H1 (cell line): ENCODE measurements at regions of chr12 and their contacts with region 1.

Region 1: DNA sequence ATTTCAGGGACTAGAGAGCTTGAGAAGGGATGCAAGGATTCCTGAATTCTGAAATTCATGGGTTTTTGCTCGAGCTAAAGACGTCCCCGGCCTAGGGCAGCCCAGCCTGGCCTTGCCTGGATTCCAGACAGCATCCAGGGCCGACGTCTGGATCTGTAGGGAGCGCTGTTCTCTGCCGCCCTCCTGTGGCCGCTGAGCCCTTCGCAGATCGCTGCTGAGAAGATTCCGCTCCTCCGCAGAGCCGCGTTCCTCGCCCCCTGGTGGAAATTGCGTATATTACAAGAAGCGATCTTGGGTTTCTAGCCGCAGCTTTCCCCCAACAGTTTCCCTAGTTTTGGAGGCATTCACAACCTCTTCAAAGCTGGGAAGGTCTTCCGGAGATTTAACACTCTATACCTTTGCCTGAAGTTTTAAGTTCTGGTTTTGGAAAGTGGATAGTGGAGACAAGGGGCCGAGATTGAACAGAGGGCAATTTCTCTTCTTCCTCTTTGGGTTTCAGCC is 5.1 kb downstream of the CISTR start:
- DNase-seq: peak; percentile 77 to 96
- H3K4me3 ChIP-seq: no peak overlapping the region
- H3K27ac ChIP-seq: no peak overlapping the region
- H3K4me1 ChIP-seq: peaks cover 0 to 24% (median 6%) of the 10 kb centered on the region in 4 experiments; a peak in 5 of 7 replicates
- H3K27me3 ChIP-seq: peaks cover 43 to 77% (median 57%) of the 10 kb centered on the region in 4 experiments
- CTCF ChIP-seq: peak; percentile 99 to 100 (median 100)
- EP300 ChIP-seq: peak in 1 of 2 experiments; percentile 50; a peak in 1 of 3 replicates
- POLR2A ChIP-seq: no peak
- RAD21 ChIP-seq: peak; percentile 89 to 96

Region 2: DNA sequence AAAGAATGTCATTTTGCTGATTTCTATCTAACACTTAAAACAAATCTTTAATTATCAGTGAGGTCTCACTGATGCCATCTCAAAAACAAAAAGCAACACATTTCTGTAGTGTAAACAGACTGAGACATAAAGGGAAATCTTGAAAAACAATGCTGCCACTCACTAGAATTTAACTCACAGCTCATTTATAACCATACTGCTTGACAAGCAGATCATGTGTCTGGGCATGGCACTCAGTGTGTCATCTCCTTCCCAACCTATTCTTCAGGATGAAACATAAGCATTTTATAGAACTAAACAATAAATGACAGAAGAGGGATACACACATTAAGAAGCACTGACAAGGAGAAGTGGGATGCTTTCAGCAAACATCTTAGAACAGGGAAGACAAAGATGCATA is 142.8 kb before region 1 on chr12:
- CTCF ChIA-PET with region 1: no interaction called
- POLR2A ChIA-PET with region 1: no interaction called
- DNase-seq: no peak
- H3K4me3 ChIP-seq: no peak overlapping the region
- H3K27ac ChIP-seq: no peak overlapping the region
- H3K4me1 ChIP-seq: peaks cover 0 to 2% (median 0%) of the 10 kb centered on the region in 4 experiments; a peak in 1 of 7 replicates
- H3K27me3 ChIP-seq: no peaks in the 10 kb centered on the region
- CTCF ChIP-seq: no peak
- EP300 ChIP-seq: no peak
- POLR2A ChIP-seq: no peak
- RAD21 ChIP-seq: no peak

Region 3: GRCh38 chr12:53684654-53685220 is 61.9 kb before region 1 on chr12:
- CTCF ChIA-PET with region 1: interaction called, 46 read pairs
- POLR2A ChIA-PET with region 1: no interaction called
- DNase-seq: no peak
- H3K4me3 ChIP-seq: no peak overlapping the region
- H3K27ac ChIP-seq: no peak overlapping the region
- H3K4me1 ChIP-seq: peaks cover 0 to 3% (median 0%) of the 10 kb centered on the region in 4 experiments; a peak in 1 of 7 replicates
- H3K27me3 ChIP-seq: no peaks in the 10 kb centered on the region
- CTCF ChIP-seq: no peak
- EP300 ChIP-seq: no peak
- POLR2A ChIP-seq: no peak
- RAD21 ChIP-seq: no peak

Region 4: DNA sequence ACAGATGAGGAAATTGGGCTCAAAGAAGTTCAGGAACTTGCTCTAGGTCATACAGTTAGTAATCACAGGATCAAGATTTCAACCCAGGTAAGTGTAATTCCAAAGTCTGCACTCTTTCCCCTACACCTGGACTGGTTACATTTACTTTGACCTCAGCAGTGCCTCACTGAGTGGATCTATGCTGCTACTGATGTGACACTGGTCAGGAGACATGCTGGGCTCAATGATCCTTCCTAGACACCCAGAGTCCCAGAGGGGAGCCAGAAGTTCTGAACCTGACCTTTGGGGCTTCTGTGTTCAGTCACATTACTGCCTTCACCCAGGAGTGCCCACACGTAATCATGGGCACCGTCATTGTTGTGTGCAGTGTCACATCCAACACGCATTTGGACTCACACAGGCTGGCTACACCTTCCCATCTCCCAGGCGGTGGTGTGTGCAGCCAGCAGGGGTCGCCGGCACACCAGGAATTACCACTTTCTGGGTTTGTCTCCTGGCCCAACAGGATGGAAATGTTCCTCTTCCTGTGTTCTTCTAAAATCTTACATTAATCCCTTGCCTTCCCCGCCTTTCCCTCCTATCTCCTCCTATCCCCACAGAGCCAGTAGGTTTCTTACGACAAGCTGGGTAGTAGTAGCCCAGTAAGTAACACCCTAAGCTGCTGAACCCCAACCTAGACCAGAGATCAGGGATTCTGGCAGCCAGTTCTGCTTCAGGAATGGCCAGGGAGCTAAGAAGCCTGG is 45.0 kb before region 1 on chr12:
- CTCF ChIA-PET with region 1: interaction called, 531 read pairs
- POLR2A ChIA-PET with region 1: interaction called, 5 read pairs
- DNase-seq: peak in 1 of 2 experiments; percentile 91
- H3K4me3 ChIP-seq: no peak overlapping the region
- H3K27ac ChIP-seq: no peak overlapping the region
- H3K4me1 ChIP-seq: peaks cover 0 to 7% (median under 1%) of the 10 kb centered on the region in 4 experiments; a peak in 4 of 7 replicates
- H3K27me3 ChIP-seq: peaks cover 8 to 18% (median 16%) of the 10 kb centered on the region in 4 experiments
- CTCF ChIP-seq: peak; percentile 97 to 100 (median 98)
- EP300 ChIP-seq: no peak
- POLR2A ChIP-seq: no peak
- RAD21 ChIP-seq: peak; percentile 96 to 99

Region 5: GRCh38 chr12:53727310-53728041 is 19.2 kb before region 1 on chr12 and contains the start of gene CALCOCO1:
- CTCF ChIA-PET with region 1: interaction called, 237 read pairs
- POLR2A ChIA-PET with region 1: interaction called, 4 read pairs
- DNase-seq: peak; percentile 90
- H3K4me3 ChIP-seq: peak within 1 kb of the TSS; percentile 71 to 94 (median 82)
- H3K27ac ChIP-seq: no peak within 1 kb of the TSS
- H3K4me1 ChIP-seq: peaks cover 0 to 11% (median 1%) of the 10 kb centered on the region in 4 experiments; a peak in 5 of 7 replicates
- H3K27me3 ChIP-seq: peaks cover 0 to 3% (median 0%) of the 10 kb centered on the region in 4 experiments; a peak in 1 of 7 replicates
- CTCF ChIP-seq: no peak
- EP300 ChIP-seq: no peak
- POLR2A ChIP-seq: no peak
- RAD21 ChIP-seq: no peak
- total RNA-seq, gene CALCOCO1: 18.7 and 20.3 TPM in 2 replicates

Region 6: DNA sequence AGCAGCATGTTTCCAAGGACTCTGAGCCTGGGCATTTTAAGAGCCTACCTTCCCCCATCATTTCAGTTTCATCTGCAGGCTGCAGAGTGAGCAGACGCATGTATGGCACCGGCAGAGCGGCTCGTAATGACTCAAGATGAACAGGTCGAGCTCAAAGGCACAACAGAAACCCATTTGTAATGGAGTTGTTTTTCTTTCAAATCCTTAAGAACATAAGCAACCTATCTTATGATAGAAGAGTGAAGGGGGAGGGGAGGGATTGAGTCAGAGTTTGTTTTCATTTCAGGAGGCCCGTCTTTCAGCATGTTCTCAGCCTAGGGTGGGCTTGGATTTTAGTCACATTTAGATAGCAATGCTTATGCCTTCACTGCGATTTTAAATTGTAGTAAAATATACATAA is 60.1 kb after region 1 on chr12:
- CTCF ChIA-PET with region 1: interaction called, 19 read pairs
- POLR2A ChIA-PET with region 1: no interaction called
- DNase-seq: no peak
- H3K4me3 ChIP-seq: no peak overlapping the region
- H3K27ac ChIP-seq: no peak overlapping the region
- H3K4me1 ChIP-seq: peaks cover 0 to 3% (median 0%) of the 10 kb centered on the region in 4 experiments; a peak in 1 of 7 replicates
- H3K27me3 ChIP-seq: peaks cover 0 to 9% (median 3%) of the 10 kb centered on the region in 4 experiments; a peak in 3 of 7 replicates
- CTCF ChIP-seq: no peak
- EP300 ChIP-seq: no peak
- POLR2A ChIP-seq: no peak
- RAD21 ChIP-seq: no peak